ENCODE measurements at regions of chr12 and their contacts with region 1.

Region 1: GRCh38 chr12:49060237-49061156 is at the start of gene KMT2D:
- H3K4me3 Mint-ChIP-seq: peak within 1 kb of the TSS; percentile 95
- H3K27ac Mint-ChIP-seq: peak within 1 kb of the TSS; percentile 98
- H3K4me1 Mint-ChIP-seq: peaks cover 56% of the 10 kb centered on the region
- H3K27me3 Mint-ChIP-seq: no peaks in the 10 kb centered on the region

Region 2: GRCh38 chr12:49018261-49019119 is 42.0 kb before region 1 on chr12 and contains the start of gene PRKAG1:
- intact Hi-C with region 1: loop called (anchors 2 kb)
- H3K4me3 Mint-ChIP-seq: peak within 1 kb of the TSS; percentile 91
- H3K27ac Mint-ChIP-seq: peak within 1 kb of the TSS; percentile 99
- H3K4me1 Mint-ChIP-seq: peaks cover 44% of the 10 kb centered on the region
- H3K27me3 Mint-ChIP-seq: no peaks in the 10 kb centered on the region

Region 3: DNA sequence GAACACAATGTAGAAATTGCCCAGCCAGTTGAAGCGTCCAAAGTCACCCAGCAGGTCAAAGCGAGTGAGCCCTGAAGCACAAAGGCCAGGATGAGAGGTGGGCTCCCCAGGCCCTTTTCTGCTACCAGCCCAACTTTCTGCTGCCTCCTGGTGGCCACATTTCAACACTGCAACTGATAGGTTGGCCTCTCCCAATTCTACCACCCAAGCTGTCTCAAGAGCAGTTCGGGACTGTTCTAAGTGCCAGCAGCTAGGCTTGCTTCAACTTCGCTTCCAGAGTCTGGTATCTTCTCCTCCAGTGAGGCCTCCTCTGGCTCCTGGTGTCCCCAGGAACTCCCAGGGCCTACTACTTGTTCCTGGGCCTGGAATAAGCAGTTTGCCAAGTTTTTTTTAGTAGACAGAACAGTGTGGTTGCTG is 37.5 kb after region 1 on chr12:
- intact Hi-C with region 1: loop called (anchors 2 kb)
- H3K4me3 Mint-ChIP-seq: no peak overlapping the region
- H3K27ac Mint-ChIP-seq: no peak overlapping the region
- H3K4me1 Mint-ChIP-seq: peaks cover 20% of the 10 kb centered on the region
- H3K27me3 Mint-ChIP-seq: peaks cover 38% of the 10 kb centered on the region

Region 4: GRCh38 chr12:49188914-49189367 is 128.4 kb after region 1 on chr12 and contains the start of gene TUBA1A:
- intact Hi-C with region 1: loop called (anchors 5 kb)
- H3K4me3 Mint-ChIP-seq: peak within 1 kb of the TSS; percentile 89
- H3K27ac Mint-ChIP-seq: peak within 1 kb of the TSS; percentile 98
- H3K4me1 Mint-ChIP-seq: peaks cover 36% of the 10 kb centered on the region
- H3K27me3 Mint-ChIP-seq: no peaks in the 10 kb centered on the region

Region 5: GRCh38 chr12:49232940-49233841 is 172.7 kb after region 1 on chr12:
- intact Hi-C with region 1: loop called (anchors 2 kb)
- H3K4me3 Mint-ChIP-seq: peak overlapping the region; percentile 77
- H3K27ac Mint-ChIP-seq: peak overlapping the region; percentile 94
- H3K4me1 Mint-ChIP-seq: peaks cover 67% of the 10 kb centered on the region
- H3K27me3 Mint-ChIP-seq: peaks cover 1% of the 10 kb centered on the region

Region 6: DNA sequence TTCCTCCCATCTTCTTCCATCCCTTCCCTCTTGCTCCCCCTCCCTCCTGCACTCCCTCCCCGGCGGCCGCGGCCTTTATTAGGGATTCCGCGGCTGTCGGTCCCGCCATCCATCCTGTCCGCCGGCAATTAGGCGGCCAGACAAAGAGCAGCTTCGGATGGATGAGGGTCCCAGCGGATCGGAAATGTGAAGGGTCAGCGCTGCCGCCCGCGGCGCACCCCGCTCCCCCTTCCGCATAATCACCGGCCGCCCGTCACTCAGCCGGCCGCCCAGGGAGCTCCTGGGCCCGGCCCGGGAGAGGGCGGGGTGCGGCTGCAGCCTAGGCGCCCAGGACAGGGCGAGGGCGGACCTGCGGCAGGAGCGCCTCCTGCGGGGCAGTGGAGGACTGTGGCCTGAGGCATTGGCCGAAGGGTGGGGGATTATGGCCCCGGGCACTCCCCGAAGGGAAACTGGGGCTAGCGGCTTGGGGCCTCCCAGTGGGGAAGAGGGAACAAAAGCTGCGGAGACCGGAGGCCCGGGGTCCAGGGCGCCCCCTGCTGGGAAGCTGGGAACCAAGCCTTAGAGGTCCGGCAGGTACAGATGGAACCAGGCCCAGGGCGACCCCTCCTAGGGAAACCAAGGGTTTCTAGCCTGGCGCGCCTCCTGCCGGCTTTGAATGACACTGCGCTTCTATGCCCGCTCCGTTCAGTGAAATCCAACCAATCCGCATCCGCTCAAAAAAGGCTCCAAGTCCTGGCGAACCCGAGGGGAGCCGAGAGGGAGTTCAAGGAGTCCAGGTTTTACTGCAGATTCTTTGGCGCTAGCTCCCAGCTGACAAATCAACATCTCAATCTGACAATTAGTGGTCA is 281.8 kb after region 1 on chr12:
- intact Hi-C with region 1: loop called (anchors 5 kb)
- H3K4me3 Mint-ChIP-seq: peak overlapping the region; percentile 74
- H3K27ac Mint-ChIP-seq: no peak overlapping the region
- H3K4me1 Mint-ChIP-seq: peaks cover 58% of the 10 kb centered on the region
- H3K27me3 Mint-ChIP-seq: peaks cover 99% of the 10 kb centered on the region